ENCODE measurements at regions of chr12 and their contacts with region 1.

Region 1: GRCh38 chr12:25960143-25960542 is 1.7 kb downstream of the RASSF8 start:
- DNase-seq: peak; percentile 50
- ATAC-seq: peak; percentile 36

Region 2: GRCh38 chr12:26017484-26018206 is 57.5 kb after region 1 on chr12:
- intact Hi-C with region 1: loop called (anchors 5 kb)
- DNase-seq: peak; percentile 28
- ATAC-seq: peak; percentile 48

Measured in left ventricle myocardium superior (tissue), 1 donor.